ENCODE measurements at regions of chr3 and their contacts with region 1.

Region 1: GRCh38 chr3:101827211-101828174 is 21.8 kb upstream of the NFKBIZ start:
- DNase-seq: peak; percentile 95
- H3K4me3 Mint-ChIP-seq: peak overlapping the region; percentile 85
- H3K27ac Mint-ChIP-seq: peak overlapping the region; percentile 96
- H3K4me1 Mint-ChIP-seq: peaks cover 63% of the 10 kb centered on the region
- H3K27me3 Mint-ChIP-seq: no peaks in the 10 kb centered on the region

Region 2: DNA sequence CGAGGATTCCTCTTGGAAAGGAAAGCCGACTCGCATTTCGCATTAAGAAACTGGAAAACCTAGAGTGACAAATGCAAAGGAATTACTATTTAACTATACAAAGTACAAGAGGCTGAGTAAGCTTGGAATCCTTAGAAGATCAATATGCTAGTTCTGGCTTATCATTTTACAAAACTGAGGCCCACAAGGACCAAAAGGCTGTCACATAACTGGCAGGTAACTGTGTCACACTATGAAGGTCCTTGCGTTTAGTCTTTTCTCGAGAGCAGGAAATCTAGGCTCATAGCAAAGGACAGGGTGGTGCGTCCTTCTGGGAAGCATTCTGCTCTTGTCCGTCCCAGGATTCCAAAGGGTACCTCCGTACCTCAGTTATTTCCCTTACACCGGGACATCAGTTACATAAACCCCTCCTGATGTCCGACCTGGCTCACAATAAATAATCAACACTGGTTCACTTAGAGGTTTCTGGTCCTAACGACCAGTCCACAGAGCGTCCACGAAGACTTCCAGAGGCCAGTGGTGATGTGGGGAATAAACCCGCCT is 141.6 kb before region 1 on chr3:
- CTCF ChIA-PET with region 1: no interaction called
- POLR2A ChIA-PET with region 1: no interaction called
- intact Hi-C with region 1: no loop called
- DNase-seq: no peak
- H3K4me3 Mint-ChIP-seq: peak overlapping the region; percentile 99
- H3K27ac Mint-ChIP-seq: peak overlapping the region; percentile 99
- H3K4me1 Mint-ChIP-seq: peaks cover 40% of the 10 kb centered on the region
- H3K27me3 Mint-ChIP-seq: no peaks in the 10 kb centered on the region

Region 3: DNA sequence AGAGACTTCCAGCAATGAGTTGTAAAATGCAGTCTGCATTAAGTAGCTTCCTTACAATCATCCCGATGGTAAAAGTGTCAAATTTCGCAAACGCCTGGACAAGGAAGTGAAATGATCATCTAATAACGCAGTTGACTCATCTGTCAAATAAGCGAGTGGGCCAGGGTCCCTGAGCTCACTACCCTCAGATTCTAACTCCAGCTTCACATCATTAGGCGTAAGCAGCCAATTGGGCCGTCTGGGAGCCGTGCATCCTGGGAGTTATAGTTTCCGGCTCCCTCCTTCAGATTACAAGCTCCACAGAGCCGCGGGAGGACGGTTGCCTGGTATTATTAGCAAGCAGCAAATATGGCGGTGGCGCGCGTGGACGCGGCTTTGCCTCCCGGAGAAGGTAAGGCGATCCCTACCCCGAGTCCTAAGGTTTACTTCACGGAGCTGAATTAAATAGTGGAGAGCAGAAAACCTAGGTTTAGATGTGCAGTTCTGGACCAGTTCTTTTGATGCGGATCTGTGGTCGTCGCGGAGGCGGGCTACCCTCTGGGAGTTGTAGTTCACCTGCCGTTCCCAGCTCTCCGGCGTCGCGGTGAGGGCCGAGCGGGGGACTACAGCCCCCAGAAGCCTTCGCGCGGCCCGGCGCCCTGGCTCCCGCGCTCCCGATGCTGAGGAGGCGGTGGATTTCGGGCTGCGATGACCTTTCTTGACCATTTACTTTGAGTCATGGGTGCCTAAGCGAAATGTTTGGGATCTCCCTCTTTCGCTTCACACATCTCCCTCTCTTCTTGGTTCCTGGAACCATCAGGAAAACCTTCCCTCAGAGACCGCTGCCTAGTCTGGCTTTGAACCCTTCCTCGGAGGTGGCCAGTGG is 102.9 kb before region 1 on chr3 and contains the start of gene CEP97:
- CTCF ChIA-PET with region 1: no interaction called
- POLR2A ChIA-PET with region 1: interaction called, 4 read pairs
- intact Hi-C with region 1: loop called (anchors 1 kb)
- DNase-seq: peak; percentile 92
- H3K4me3 Mint-ChIP-seq: peak within 1 kb of the TSS; percentile 99
- H3K27ac Mint-ChIP-seq: peak within 1 kb of the TSS; percentile 99
- H3K4me1 Mint-ChIP-seq: peaks cover 46% of the 10 kb centered on the region
- H3K27me3 Mint-ChIP-seq: no peaks in the 10 kb centered on the region
- total RNA-seq, gene CEP97: 16.6 to 17.9 TPM

Region 4: GRCh38 chr3:101809178-101810021 is 18.1 kb before region 1 on chr3:
- CTCF ChIA-PET with region 1: interaction called, 9 read pairs
- POLR2A ChIA-PET with region 1: interaction called, 6 read pairs
- intact Hi-C with region 1: loop called (anchors 1 kb)
- DNase-seq: peak; percentile 31
- H3K4me3 Mint-ChIP-seq: no peak overlapping the region
- H3K27ac Mint-ChIP-seq: no peak overlapping the region
- H3K4me1 Mint-ChIP-seq: peaks cover 43% of the 10 kb centered on the region
- H3K27me3 Mint-ChIP-seq: no peaks in the 10 kb centered on the region

Region 5: DNA sequence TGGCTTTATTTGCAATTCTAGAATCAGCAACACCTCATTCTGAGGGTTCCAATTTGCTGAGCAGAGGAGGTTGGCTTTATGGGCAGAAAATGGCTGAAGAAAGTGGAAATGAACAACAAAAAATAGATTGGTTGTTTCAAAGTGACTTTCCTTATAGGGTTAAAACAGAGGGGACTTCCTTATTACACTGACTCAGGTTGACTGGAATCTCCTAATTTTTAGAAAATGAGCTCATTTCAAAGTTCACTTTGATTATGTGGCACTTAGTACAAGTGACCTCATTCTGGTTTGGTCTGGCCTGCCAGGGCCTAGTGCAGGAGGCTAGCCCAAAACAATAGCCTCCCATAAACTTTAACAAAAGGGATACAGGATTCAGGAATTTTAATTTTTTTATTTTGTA is 63.2 kb after region 1 on chr3:
- CTCF ChIA-PET with region 1: no interaction called
- POLR2A ChIA-PET with region 1: interaction called, 5 read pairs
- intact Hi-C with region 1: loop called (anchors 2 kb)
- DNase-seq: peak; percentile 33
- H3K4me3 Mint-ChIP-seq: no peak overlapping the region
- H3K27ac Mint-ChIP-seq: no peak overlapping the region
- H3K4me1 Mint-ChIP-seq: peaks cover 5% of the 10 kb centered on the region
- H3K27me3 Mint-ChIP-seq: no peaks in the 10 kb centered on the region

Region 6: DNA sequence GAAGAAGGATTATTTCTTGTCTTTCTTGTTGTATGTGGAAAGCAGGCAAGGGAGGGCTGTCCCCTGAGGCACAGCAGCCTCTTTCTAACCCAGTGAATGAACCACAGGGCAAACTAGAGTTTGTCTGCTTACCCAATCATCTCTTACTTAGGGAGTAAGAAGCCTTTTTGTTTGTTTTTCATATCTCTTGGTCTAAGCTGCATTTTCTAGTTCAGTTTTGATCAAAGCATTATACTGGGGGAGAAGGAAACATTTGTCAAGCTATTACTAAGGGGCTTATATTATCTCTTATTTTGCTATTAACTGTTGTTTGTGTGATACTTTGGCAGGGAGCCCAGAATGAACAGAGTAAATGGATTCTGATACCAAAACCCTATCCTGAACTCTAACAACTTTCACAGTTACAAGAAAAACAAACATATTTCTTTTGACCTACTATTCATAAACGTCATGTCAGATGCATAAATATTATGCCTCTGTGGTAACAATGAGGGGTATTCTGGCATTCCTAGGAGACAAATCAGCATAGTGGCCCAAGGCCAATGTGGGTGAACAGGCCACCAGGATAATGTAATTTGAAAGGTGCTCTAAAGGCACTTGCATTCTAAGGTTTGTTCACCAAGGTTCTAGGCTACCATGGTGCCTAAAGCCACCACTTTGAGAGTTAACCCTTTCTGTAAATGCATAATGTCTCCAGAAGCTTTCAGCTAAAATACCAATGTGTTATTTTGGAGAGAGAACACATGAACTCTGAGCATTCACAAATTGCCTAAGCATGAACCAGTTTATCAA is 335.7 kb after region 1 on chr3:
- CTCF ChIA-PET with region 1: no interaction called
- POLR2A ChIA-PET with region 1: no interaction called
- intact Hi-C with region 1: loop called (anchors 5 kb)
- DNase-seq: no peak
- H3K4me3 Mint-ChIP-seq: no peak overlapping the region
- H3K27ac Mint-ChIP-seq: no peak overlapping the region
- H3K4me1 Mint-ChIP-seq: peaks cover 23% of the 10 kb centered on the region
- H3K27me3 Mint-ChIP-seq: no peaks in the 10 kb centered on the region

Measured in activated CD4-positive, alpha-beta memory T cell treated with anti-CD3 and anti-CD28 coated beads for 36 hours (primary cell).